ENCODE measurements at regions of chr5 and their contacts with region 1.

Region 1: GRCh38 chr5:100903039-100903887 is at the start of gene ST8SIA4:
- DNase-seq: peak; percentile 70 to 95 (median 87)
- ATAC-seq: peak; percentile 82
- H3K4me3 ChIP-seq: peak within 1 kb of the TSS; percentile 83
- H3K4me3 Mint-ChIP-seq: peak within 1 kb of the TSS; percentile 88 to 99 (median 96)
- H3K27ac ChIP-seq: peak within 1 kb of the TSS; percentile 89
- H3K27ac Mint-ChIP-seq: peak within 1 kb of the TSS; percentile 86 to 98 (median 94)
- H3K4me1 ChIP-seq: peaks cover 22 to 23% of the 10 kb centered on the region in 2 donors
- H3K4me1 Mint-ChIP-seq: peaks cover 32 to 51% (median 46%) of the 10 kb centered on the region in 7 donors
- H3K27me3 ChIP-seq: no peaks in the 10 kb centered on the region
- H3K27me3 Mint-ChIP-seq: no peaks in the 10 kb centered on the region
- total RNA-seq, gene ST8SIA4: 17.5 to 54.5 (median 23.4) TPM

Region 2: DNA sequence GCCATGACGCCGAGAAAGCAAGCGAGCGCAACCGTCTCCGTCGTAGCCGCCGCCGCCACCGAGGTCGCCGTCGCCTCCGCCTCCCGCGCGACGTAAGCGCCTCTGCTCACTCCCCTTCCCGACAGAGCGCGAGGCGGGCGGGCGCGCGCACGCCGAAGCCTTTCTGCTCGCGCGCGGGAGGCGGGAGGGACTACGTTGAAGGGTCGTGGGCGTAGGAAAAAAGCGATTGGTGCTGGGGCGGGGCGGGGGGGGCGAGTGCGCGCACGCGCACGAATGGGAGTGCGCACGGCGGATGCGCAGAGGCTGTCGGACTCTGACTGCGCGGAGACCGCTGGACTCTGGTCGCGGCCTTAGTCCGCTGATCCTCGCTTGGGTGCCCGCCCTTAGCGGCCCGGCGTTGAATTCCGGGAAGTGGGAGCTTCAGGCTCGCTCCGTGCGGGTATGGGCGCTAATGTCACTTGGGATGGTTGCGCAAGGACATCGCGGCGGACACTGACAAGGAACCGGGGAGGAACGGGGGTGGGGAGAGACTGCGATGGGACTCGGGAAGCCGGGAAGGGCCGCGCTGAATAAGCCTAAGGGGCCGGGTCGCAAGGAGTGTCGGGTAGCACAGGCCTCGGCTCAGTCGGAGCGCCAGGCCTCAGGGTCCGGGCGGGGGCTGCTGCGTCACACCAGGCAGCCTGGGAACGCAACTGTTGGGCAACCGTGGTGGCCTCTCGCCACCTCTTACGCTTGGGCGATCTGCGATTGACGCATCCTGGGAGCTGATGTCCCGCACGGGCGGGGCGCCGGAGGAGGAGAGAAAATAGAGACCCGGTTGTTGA is 1974.2 kb before region 1 on chr5 and contains the start of gene CHD1:
- CTCF ChIA-PET with region 1: no interaction called
- POLR2A ChIA-PET with region 1: interaction called, 19 read pairs
- intact Hi-C with region 1: loop called (anchors 1 to 2 kb)
- DNase-seq: peak; percentile 91 to 98 (median 96)
- ATAC-seq: peak; percentile 83
- H3K4me3 ChIP-seq: peak within 1 kb of the TSS; percentile 96
- H3K4me3 Mint-ChIP-seq: peak within 1 kb of the TSS; percentile 93 to 99 (median 98)
- H3K27ac ChIP-seq: peak within 1 kb of the TSS; percentile 98
- H3K27ac Mint-ChIP-seq: peak within 1 kb of the TSS; percentile 94 to 100 (median 99)
- H3K4me1 ChIP-seq: peaks cover 42 to 44% of the 10 kb centered on the region in 2 donors
- H3K4me1 Mint-ChIP-seq: peaks cover 33 to 83% (median 70%) of the 10 kb centered on the region in 7 donors
- H3K27me3 ChIP-seq: no peaks in the 10 kb centered on the region
- H3K27me3 Mint-ChIP-seq: peaks cover 0 to 2% (median 0%) of the 10 kb centered on the region in 5 donors
- total RNA-seq, gene CHD1: 51.8 to 134 (median 92.4) TPM

Region 3: DNA sequence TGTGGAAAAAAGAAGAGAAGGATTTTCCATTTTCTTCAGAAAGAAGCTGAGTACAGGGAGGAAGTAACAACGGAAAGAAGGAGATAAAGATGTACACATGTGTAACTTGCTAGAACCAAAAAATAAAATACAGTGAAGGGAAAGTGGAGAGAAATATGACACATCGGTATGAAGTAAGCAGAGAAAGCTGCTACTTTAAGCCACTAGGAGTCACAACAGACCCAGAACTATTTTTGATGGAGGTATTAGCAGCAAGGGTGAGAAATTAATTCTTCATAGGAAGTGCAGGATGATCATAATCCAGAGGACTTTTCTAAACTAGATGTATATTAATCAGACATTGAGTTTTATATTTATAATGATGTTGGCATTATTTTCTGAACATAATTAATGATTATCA is 279.5 kb before region 1 on chr5:
- CTCF ChIA-PET with region 1: no interaction called
- POLR2A ChIA-PET with region 1: no interaction called
- intact Hi-C with region 1: loop called (anchors 1 kb)
- DNase-seq: peak in 5 of 9 donors; percentile 4 to 44 (median 19)
- ATAC-seq: peak; percentile 68
- H3K4me3 ChIP-seq: no peak overlapping the region
- H3K4me3 Mint-ChIP-seq: no peak overlapping the region
- H3K27ac ChIP-seq: no peak overlapping the region
- H3K27ac Mint-ChIP-seq: no peak overlapping the region
- H3K4me1 ChIP-seq: no peaks in the 10 kb centered on the region
- H3K4me1 Mint-ChIP-seq: no peaks in the 10 kb centered on the region
- H3K27me3 ChIP-seq: no peaks in the 10 kb centered on the region
- H3K27me3 Mint-ChIP-seq: peaks cover 0 to 5% (median 3%) of the 10 kb centered on the region in 5 donors

Region 4: DNA sequence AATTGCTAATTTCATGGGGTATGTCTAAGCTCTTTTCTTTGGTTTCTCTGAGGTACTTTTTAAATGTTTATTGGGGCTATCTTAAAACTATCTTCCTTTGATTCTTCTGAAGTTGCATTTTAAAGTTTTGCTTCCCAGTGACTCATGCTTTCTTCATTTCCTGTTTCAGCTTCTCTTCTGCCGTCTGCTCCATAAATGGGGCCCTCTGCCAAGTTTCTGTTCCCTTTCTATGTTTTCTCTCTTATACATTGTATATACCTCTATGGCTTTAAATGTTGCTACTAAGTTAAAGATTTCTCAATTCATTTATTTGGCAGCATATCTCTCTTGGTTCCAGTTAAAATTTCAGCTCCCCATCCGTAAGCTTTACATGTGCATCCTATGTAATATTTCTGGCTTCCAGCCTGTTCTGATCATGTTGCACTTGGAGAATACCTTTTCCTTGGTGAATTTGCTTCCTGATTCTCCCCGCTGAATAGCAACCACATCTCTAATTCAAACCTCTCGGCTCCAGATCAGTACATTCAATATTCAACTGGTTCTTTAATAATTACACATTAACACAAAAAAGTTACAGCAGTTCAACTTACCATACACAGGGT is 125.5 kb before region 1 on chr5:
- CTCF ChIA-PET with region 1: interaction called, 6 read pairs
- POLR2A ChIA-PET with region 1: interaction called, 45 read pairs
- intact Hi-C with region 1: loop called (anchors 1 kb)
- DNase-seq: no peak
- ATAC-seq: peak; percentile 67
- H3K4me3 ChIP-seq: no peak overlapping the region
- H3K4me3 Mint-ChIP-seq: peak overlapping the region in 6 of 10 donors; percentile 1 to 66 (median 20)
- H3K27ac ChIP-seq: no peak overlapping the region
- H3K27ac Mint-ChIP-seq: peak overlapping the region in 4 of 9 donors; percentile 8 to 70 (median 20)
- H3K4me1 ChIP-seq: peaks cover 3 to 13% of the 10 kb centered on the region in 2 donors
- H3K4me1 Mint-ChIP-seq: peaks cover 24 to 42% (median 35%) of the 10 kb centered on the region in 7 donors
- H3K27me3 ChIP-seq: no peaks in the 10 kb centered on the region
- H3K27me3 Mint-ChIP-seq: no peaks in the 10 kb centered on the region

Region 5: GRCh38 chr5:100890461-100891008 is 12.7 kb before region 1 on chr5:
- CTCF ChIA-PET with region 1: interaction called, 7 read pairs
- POLR2A ChIA-PET with region 1: interaction called, 68 read pairs
- intact Hi-C with region 1: loop called (anchors 1 kb)
- DNase-seq: no peak
- ATAC-seq: peak; percentile 47
- H3K4me3 ChIP-seq: peak overlapping the region; percentile 10
- H3K4me3 Mint-ChIP-seq: peak overlapping the region in 9 of 10 donors; percentile 6 to 81 (median 69)
- H3K27ac ChIP-seq: no peak overlapping the region
- H3K27ac Mint-ChIP-seq: peak overlapping the region; percentile 39 to 92 (median 72)
- H3K4me1 ChIP-seq: peaks cover 26 to 34% of the 10 kb centered on the region in 2 donors
- H3K4me1 Mint-ChIP-seq: peaks cover 27 to 83% (median 71%) of the 10 kb centered on the region in 7 donors
- H3K27me3 ChIP-seq: no peaks in the 10 kb centered on the region
- H3K27me3 Mint-ChIP-seq: no peaks in the 10 kb centered on the region

Region 6: DNA sequence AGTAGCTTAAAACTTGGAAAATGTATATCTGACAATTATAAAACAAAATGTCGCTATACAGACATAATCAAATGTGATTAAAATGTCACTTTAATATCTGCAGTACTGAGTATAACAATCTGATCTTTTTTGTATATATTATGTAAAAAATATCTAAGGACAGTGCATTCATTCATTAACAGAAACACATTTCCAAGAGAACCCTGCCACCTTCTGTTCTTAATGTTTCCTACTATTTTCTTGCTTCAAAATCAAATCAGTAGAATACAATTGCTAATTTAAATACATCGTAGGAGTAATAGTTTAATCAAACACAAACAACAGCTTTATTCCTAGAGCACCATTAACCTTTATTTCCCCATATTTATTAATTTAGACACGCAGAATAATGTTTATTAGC is 142.4 kb after region 1 on chr5:
- CTCF ChIA-PET with region 1: interaction called, 4 read pairs
- POLR2A ChIA-PET with region 1: no interaction called
- intact Hi-C with region 1: loop called in 1 of 2 experiments (anchors 2 kb)
- DNase-seq: peak in 5 of 9 donors; percentile 4 to 20 (median 8)
- ATAC-seq: no peak
- H3K4me3 ChIP-seq: no peak overlapping the region
- H3K4me3 Mint-ChIP-seq: no peak overlapping the region
- H3K27ac ChIP-seq: no peak overlapping the region
- H3K27ac Mint-ChIP-seq: no peak overlapping the region
- H3K4me1 ChIP-seq: no peaks in the 10 kb centered on the region
- H3K4me1 Mint-ChIP-seq: peaks cover 0 to 10% (median 9%) of the 10 kb centered on the region in 7 donors
- H3K27me3 ChIP-seq: no peaks in the 10 kb centered on the region
- H3K27me3 Mint-ChIP-seq: peaks cover 0 to 2% (median 0%) of the 10 kb centered on the region in 5 donors